ENCODE measurements at regions of chr4 and their contacts with region 1.

Region 1: GRCh38 chr4:122764821-122765215 is 32.3 kb downstream of the BBS12 start:
- DNase-seq: no peak
- ATAC-seq: no peak
- H3K4me3 ChIP-seq: no peak overlapping the region
- H3K4me3 Mint-ChIP-seq: no peak overlapping the region
- H3K27ac ChIP-seq: no peak overlapping the region
- H3K27ac Mint-ChIP-seq: no peak overlapping the region
- H3K4me1 ChIP-seq: peaks cover 12% of the 10 kb centered on the region
- H3K4me1 Mint-ChIP-seq: peaks cover 32 to 40% of the 10 kb centered on the region in 2 donors
- H3K27me3 ChIP-seq: no peaks in the 10 kb centered on the region
- H3K27me3 Mint-ChIP-seq: peaks cover 0 to 7% of the 10 kb centered on the region in 2 donors
- CTCF ChIP-seq: no peak

Region 2: GRCh38 chr4:122129061-122129460 is 635.8 kb before region 1 on chr4:
- intact Hi-C with region 1: no loop called
- DNase-seq: no peak
- ATAC-seq: no peak
- H3K4me3 ChIP-seq: no peak overlapping the region
- H3K4me3 Mint-ChIP-seq: no peak overlapping the region
- H3K27ac ChIP-seq: no peak overlapping the region
- H3K27ac Mint-ChIP-seq: no peak overlapping the region
- H3K4me1 ChIP-seq: no peaks in the 10 kb centered on the region
- H3K4me1 Mint-ChIP-seq: peaks cover 7 to 9% of the 10 kb centered on the region in 2 donors
- H3K27me3 ChIP-seq: no peaks in the 10 kb centered on the region
- H3K27me3 Mint-ChIP-seq: peaks cover 4 to 6% of the 10 kb centered on the region in 2 donors
- CTCF ChIP-seq: no peak

Region 3: DNA sequence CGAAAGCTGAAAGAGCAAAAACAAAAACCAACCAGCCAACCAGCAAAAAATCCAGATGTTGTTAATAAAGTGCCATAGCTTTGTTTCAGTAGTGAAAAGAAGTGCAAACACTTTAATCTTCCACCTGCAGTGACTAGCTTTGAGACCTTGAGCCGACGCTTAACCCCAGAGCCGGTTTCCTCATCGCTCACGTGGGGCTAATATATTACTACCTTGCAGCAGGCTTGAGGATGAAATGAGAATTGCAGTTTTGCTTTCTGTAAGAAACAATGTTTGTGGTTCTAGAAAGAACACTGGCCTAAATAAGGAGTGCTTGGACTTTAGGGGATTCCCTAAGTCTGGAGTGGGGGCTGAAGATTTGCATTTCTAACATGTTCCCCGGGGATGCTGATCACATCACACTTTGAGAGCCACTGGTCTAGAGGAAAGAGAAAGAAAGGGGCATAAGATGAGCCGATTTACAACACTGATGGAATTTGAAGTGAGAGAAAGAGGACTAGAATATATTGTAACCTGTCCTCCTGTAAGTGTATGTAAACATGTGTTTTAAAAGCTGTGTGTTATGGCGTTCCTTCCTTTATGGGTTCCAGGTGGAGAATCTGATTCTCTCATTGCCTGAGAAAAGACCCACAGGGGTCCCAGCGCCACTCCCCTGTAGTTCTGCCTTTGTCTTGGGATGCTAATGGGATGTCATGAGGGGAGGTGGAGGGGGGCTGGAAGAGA is 63.2 kb after region 1 on chr4:
- intact Hi-C with region 1: loop called (anchors 5 kb)
- DNase-seq: peak; percentile 18 to 65
- ATAC-seq: peak; percentile 72 to 77 (median 76)
- H3K4me3 ChIP-seq: peak overlapping the region; percentile 43
- H3K4me3 Mint-ChIP-seq: peak overlapping the region; percentile 72
- H3K27ac ChIP-seq: no peak overlapping the region
- H3K27ac Mint-ChIP-seq: peak overlapping the region; percentile 1 to 59
- H3K4me1 ChIP-seq: peaks cover 14% of the 10 kb centered on the region
- H3K4me1 Mint-ChIP-seq: peaks cover 15 to 29% of the 10 kb centered on the region in 2 donors
- H3K27me3 ChIP-seq: peaks cover 39% of the 10 kb centered on the region
- H3K27me3 Mint-ChIP-seq: peaks cover 60 to 63% of the 10 kb centered on the region in 2 donors
- CTCF ChIP-seq: no peak